Naive thymus-derived CD4-positive, alpha-beta T cell (primary cell): ENCODE measurements at regions of chr12 and their contacts with region 1.

Region 1: GRCh38 chr12:92145731-92146496 is at the start of gene BTG1:
- DNase-seq: peak; percentile 90 to 100 (median 100)
- ATAC-seq: peak; percentile 84
- H3K4me3 ChIP-seq: peak within 1 kb of the TSS; percentile 98
- H3K4me3 Mint-ChIP-seq: peak within 1 kb of the TSS; percentile 94 to 100 (median 98)
- H3K27ac ChIP-seq: peak within 1 kb of the TSS; percentile 91
- H3K27ac Mint-ChIP-seq: peak within 1 kb of the TSS; percentile 98 to 100 (median 99)
- H3K4me1 ChIP-seq: peaks cover 7 to 14% of the 10 kb centered on the region in 2 donors
- H3K4me1 Mint-ChIP-seq: peaks cover 18 to 34% (median 27%) of the 10 kb centered on the region in 7 donors
- H3K27me3 ChIP-seq: no peaks in the 10 kb centered on the region
- H3K27me3 Mint-ChIP-seq: peaks cover 0 to 4% (median 0%) of the 10 kb centered on the region in 5 donors
- total RNA-seq, gene BTG1: 188 to 1,246 (median 571) TPM

Region 2: DNA sequence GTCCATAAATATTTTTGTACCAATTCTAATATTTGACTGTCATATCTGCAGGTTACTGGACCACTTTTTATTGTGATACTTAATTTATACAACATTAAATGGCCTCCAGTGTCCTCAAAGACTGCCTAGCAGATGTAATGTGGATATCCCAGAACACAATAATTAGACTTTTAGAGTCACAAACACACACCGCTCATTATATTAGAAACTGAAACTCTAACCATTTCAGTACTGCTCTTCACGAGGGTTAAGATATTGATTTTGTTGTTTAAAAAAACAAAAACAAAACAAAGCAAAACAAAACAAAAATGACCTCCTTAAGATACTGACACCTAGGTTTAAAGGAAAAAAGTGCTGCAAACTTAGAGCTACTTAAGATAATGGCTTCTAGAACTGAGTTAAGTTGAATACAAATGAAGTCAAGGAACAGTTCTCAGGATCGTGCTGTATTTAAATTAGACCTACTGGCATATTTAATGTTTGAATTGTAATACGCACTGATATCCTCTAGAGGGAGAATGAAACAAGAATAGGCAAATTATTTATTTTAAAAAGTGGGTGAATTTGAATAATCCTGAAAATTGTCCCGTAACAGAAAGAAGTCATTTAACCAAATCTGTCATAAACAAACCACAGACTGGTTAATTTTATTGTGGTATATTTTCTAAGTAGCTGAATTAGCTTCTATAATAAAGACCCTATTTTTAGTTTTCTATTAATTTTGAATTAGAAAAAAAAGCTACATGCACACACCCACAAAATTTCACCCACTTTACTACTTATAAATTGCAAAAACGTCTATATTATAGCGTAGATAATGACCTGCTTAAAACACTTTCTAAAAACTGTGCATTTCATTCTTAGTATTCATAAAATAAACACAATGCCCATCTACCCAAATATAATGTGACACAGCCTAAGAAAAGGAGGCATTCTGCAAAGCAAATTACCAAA is 568.1 kb before region 1 on chr12:
- CTCF ChIA-PET with region 1: interaction called, 6 read pairs
- POLR2A ChIA-PET with region 1: interaction called, 16 read pairs
- intact Hi-C with region 1: loop called (anchors 1 to 2 kb)
- DNase-seq: peak in 6 of 9 donors; percentile 30 to 53 (median 39)
- ATAC-seq: peak; percentile 88
- H3K4me3 ChIP-seq: peak overlapping the region; percentile 39
- H3K4me3 Mint-ChIP-seq: peak overlapping the region; percentile 16 to 93 (median 84)
- H3K27ac ChIP-seq: no peak overlapping the region
- H3K27ac Mint-ChIP-seq: peak overlapping the region; percentile 14 to 94 (median 81)
- H3K4me1 ChIP-seq: peaks cover 0 to 5% of the 10 kb centered on the region in 2 donors
- H3K4me1 Mint-ChIP-seq: peaks cover 12 to 36% (median 19%) of the 10 kb centered on the region in 7 donors
- H3K27me3 ChIP-seq: no peaks in the 10 kb centered on the region
- H3K27me3 Mint-ChIP-seq: peaks cover 0 to 3% (median 0%) of the 10 kb centered on the region in 5 donors

Region 3: DNA sequence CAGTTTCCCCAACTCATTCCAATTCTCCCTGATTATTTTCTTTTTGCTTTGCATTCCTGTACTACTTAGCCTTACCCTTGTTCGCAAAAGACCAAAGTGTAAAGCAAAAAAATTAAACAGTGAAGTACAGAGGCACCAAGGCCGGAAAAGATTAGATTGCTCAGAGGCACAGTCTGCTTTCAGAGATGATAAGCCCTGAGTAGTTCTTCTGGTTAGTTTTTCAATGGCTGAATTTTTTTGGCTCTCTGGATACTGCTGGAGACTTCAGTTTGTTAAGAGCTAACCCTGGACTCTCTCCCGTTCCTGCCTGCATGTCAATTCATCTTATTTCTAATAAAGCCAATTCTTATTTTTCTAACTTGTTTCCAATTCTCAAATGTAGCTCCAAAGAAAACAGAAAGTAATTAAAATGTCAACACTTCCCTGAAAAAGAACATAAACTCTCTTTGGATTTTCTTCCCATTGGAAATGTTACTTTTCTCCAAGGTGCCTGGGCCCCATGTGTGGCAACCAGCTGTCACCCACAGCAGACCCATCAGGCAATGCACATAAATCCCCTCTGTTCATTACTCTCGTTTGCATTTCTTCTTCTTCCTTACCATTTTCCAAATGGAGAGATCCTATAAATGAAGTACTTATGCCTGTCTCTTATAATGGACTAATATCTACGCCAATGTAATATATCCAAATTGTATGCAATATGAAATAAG is 143.1 kb before region 1 on chr12:
- CTCF ChIA-PET with region 1: interaction called, 4 read pairs
- POLR2A ChIA-PET with region 1: interaction called, 225 read pairs
- intact Hi-C with region 1: loop called in 1 of 2 experiments (anchors 5 kb)
- DNase-seq: peak in 2 of 9 donors; percentile 12 to 17
- ATAC-seq: peak; percentile 52
- H3K4me3 ChIP-seq: no peak overlapping the region
- H3K4me3 Mint-ChIP-seq: peak overlapping the region in 9 of 10 donors; percentile 50 to 83 (median 69)
- H3K27ac ChIP-seq: peak overlapping the region; percentile 60
- H3K27ac Mint-ChIP-seq: peak overlapping the region; percentile 6 to 98 (median 91)
- H3K4me1 ChIP-seq: peaks cover 0 to 23% of the 10 kb centered on the region in 2 donors
- H3K4me1 Mint-ChIP-seq: peaks cover 14 to 81% (median 66%) of the 10 kb centered on the region in 7 donors
- H3K27me3 ChIP-seq: no peaks in the 10 kb centered on the region
- H3K27me3 Mint-ChIP-seq: no peaks in the 10 kb centered on the region

Region 4: DNA sequence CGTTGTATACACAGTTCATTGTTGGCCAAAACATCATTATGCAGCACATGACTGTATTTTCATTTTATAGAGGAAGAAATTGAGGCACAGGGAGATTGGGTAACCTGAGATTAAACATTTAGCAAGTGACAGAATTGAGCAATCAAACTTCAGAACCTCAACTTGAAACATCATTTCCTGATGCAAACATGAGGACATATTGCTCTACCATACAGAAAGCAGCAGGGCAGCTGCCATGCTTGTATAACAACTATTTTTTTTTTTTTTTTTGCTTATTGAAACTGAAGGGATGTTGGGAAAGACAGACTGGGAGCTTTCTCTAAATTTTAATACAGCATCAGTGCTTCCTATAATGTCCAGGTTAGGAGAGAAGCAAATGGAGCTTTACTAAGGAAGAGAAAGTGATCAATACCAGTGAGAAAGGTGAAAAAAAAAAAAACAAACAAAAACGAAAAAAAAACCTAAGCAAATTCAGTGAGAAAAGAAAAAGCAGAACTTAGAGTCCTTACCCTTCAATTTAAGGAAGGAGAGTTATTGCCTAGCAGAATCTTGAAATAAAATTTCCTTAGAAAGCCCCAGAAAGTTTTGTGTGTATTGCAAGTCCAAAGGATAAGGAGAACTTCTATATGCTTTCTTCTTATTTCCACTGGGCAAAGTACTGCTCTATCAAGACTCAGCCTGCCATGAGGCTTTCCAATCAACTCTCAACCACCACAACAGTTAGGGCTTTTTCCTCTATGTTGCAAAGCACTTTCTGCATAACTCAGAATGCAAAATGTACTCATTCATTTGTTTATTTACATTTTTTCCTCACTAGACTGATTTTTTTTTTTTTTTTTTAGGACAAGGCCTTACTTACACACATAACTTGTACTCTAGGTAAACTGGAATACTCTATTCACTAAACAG is 21.9 kb before region 1 on chr12:
- CTCF ChIA-PET with region 1: interaction called, 7 read pairs
- POLR2A ChIA-PET with region 1: interaction called, 267 read pairs
- intact Hi-C with region 1: no loop called
- DNase-seq: no peak
- ATAC-seq: peak; percentile 44
- H3K4me3 ChIP-seq: peak overlapping the region; percentile 14
- H3K4me3 Mint-ChIP-seq: peak overlapping the region; percentile 27 to 94 (median 68)
- H3K27ac ChIP-seq: no peak overlapping the region
- H3K27ac Mint-ChIP-seq: peak overlapping the region; percentile 24 to 82 (median 65)
- H3K4me1 ChIP-seq: peaks cover 3 to 47% of the 10 kb centered on the region in 2 donors
- H3K4me1 Mint-ChIP-seq: peaks cover 47 to 76% (median 72%) of the 10 kb centered on the region in 7 donors
- H3K27me3 ChIP-seq: no peaks in the 10 kb centered on the region
- H3K27me3 Mint-ChIP-seq: no peaks in the 10 kb centered on the region

Region 5: GRCh38 chr12:92289629-92290349 is 143.9 kb after region 1 on chr12:
- CTCF ChIA-PET with region 1: no interaction called
- POLR2A ChIA-PET with region 1: interaction called, 20 read pairs
- intact Hi-C with region 1: no loop called
- DNase-seq: no peak
- ATAC-seq: no peak
- H3K4me3 ChIP-seq: no peak overlapping the region
- H3K4me3 Mint-ChIP-seq: no peak overlapping the region
- H3K27ac ChIP-seq: no peak overlapping the region
- H3K27ac Mint-ChIP-seq: peak overlapping the region in 1 of 9 donors; percentile 76
- H3K4me1 ChIP-seq: no peaks in the 10 kb centered on the region
- H3K4me1 Mint-ChIP-seq: peaks cover 3 to 30% (median 16%) of the 10 kb centered on the region in 7 donors
- H3K27me3 ChIP-seq: no peaks in the 10 kb centered on the region
- H3K27me3 Mint-ChIP-seq: no peaks in the 10 kb centered on the region

Region 6: DNA sequence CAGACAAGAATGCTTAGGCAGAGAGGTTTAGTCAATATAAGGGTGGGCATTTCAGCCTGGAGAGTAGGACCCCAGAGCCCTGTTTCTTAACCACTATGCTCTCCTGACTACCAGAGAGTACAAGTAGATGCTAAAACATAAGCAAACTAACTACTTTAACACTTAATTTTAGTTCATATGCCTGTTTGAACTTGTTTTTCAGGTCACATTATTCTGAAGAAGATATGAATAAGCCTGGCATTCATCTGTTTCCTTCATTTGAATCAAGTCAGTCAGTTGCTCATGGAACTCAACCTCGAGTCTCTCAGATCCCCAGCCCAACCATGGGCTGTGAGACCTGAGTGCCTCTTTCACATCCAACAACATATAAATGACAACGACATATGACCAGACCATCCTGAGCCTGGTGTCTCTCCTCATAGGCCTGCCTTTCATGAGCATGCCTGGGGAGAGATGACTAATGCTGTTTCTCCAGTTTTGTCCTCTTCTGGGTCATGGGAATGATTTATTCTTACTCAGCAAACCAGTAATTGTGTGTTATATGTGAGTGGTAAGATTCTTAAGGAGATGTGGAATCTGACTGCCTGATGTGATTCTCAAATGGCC is 250.8 kb after region 1 on chr12:
- CTCF ChIA-PET with region 1: interaction called, 5 read pairs
- POLR2A ChIA-PET with region 1: interaction called, 211 read pairs
- intact Hi-C with region 1: loop called in 1 of 2 experiments (anchors 1 kb)
- DNase-seq: no peak
- ATAC-seq: no peak
- H3K4me3 ChIP-seq: no peak overlapping the region
- H3K4me3 Mint-ChIP-seq: peak overlapping the region in 8 of 10 donors; percentile 9 to 76 (median 62)
- H3K27ac ChIP-seq: peak overlapping the region; percentile 85
- H3K27ac Mint-ChIP-seq: peak overlapping the region; percentile 90 to 100 (median 98)
- H3K4me1 ChIP-seq: peaks cover 76 to 84% of the 10 kb centered on the region in 2 donors
- H3K4me1 Mint-ChIP-seq: peaks cover 56 to 100% (median 93%) of the 10 kb centered on the region in 7 donors
- H3K27me3 ChIP-seq: no peaks in the 10 kb centered on the region
- H3K27me3 Mint-ChIP-seq: no peaks in the 10 kb centered on the region

Region 7: DNA sequence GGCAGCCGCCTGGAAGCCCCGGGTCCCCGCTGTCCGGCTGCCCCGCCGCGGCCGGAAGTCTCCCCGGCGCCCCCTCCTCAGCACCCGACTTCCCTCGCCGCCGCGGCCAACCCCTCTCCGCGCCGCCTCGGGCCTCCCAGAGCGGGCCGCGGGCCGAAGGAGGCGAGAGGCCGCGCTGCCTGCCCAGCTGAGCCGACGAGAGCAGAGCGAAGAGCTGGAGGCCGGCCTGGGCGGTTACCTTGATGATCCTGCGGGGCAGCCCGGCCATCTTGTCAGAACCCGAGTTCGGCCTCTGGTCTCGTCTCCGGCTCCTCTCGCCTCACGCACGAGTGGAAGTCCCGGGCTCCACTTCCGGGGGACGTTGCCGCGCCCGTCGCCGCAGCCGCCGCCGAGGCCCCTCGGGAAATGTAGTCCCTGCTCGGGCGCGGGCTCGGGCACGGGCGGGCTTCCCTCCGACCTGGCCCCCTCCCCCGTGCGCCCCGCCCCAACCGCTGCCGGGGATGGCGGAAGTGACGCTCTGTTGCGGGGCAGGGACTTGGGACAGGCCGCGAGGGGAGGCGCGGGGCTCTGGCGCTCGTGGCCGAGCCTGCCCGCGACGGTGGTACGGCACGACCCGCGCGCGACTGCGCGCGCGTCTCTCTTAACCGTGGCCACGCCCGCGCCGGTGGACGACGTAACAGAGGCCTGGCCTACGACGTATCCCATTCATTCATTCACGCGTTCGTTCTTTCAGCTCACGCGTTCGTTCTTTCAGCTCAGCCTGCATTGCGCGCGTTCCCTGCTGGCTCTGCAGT is 1295.9 kb after region 1 on chr12 and contains the start of gene UBE2N:
- CTCF ChIA-PET with region 1: no interaction called
- POLR2A ChIA-PET with region 1: no interaction called
- intact Hi-C with region 1: loop called in 1 of 2 experiments (anchors 10 kb)
- DNase-seq: peak; percentile 96 to 98 (median 97)
- ATAC-seq: peak; percentile 95
- H3K4me3 ChIP-seq: peak within 1 kb of the TSS; percentile 66
- H3K4me3 Mint-ChIP-seq: peak within 1 kb of the TSS; percentile 89 to 100 (median 97)
- H3K27ac ChIP-seq: peak within 1 kb of the TSS; percentile 98
- H3K27ac Mint-ChIP-seq: peak within 1 kb of the TSS; percentile 96 to 100 (median 98)
- H3K4me1 ChIP-seq: peaks cover 35 to 48% of the 10 kb centered on the region in 2 donors
- H3K4me1 Mint-ChIP-seq: peaks cover 44 to 54% (median 49%) of the 10 kb centered on the region in 7 donors
- H3K27me3 ChIP-seq: no peaks in the 10 kb centered on the region
- H3K27me3 Mint-ChIP-seq: no peaks in the 10 kb centered on the region
- total RNA-seq, gene UBE2N: 76.6 to 180 (median 77.5) TPM